ENCODE measurements at regions of chr6 and their contacts with region 1.

Region 1: GRCh38 chr6:142885182-142885867 is 59.7 kb downstream of the HIVEP2 start:
- DNase-seq: peak in 1 of 2 donors; percentile 61
- ATAC-seq: peak; percentile 89 to 97 (median 94)
- H3K4me3 ChIP-seq: peak overlapping the region in 9 of 10 donors; percentile 23 to 54 (median 45)
- H3K27ac ChIP-seq: peak overlapping the region; percentile 31 to 81 (median 70)
- H3K4me1 ChIP-seq: peaks cover 0 to 61% (median 47%) of the 10 kb centered on the region in 9 donors
- H3K27me3 ChIP-seq: no peaks in the 10 kb centered on the region
- CTCF ChIP-seq: no peak

Region 2: GRCh38 chr6:142692942-142693341 is 192.4 kb before region 1 on chr6:
- intact Hi-C with region 1: loop called in 6 of 10 experiments (anchors 5 to 10 kb)
- DNase-seq: peak; percentile 40 to 71
- ATAC-seq: peak; percentile 69 to 85 (median 77)
- H3K4me3 ChIP-seq: no peak overlapping the region
- H3K27ac ChIP-seq: peak overlapping the region in 3 of 10 donors; percentile 23 to 51 (median 29)
- H3K4me1 ChIP-seq: peaks cover 0 to 34% (median 5%) of the 10 kb centered on the region in 9 donors
- H3K27me3 ChIP-seq: no peaks in the 10 kb centered on the region
- CTCF ChIP-seq: peak; percentile 85 to 98 (median 91)

Region 3: DNA sequence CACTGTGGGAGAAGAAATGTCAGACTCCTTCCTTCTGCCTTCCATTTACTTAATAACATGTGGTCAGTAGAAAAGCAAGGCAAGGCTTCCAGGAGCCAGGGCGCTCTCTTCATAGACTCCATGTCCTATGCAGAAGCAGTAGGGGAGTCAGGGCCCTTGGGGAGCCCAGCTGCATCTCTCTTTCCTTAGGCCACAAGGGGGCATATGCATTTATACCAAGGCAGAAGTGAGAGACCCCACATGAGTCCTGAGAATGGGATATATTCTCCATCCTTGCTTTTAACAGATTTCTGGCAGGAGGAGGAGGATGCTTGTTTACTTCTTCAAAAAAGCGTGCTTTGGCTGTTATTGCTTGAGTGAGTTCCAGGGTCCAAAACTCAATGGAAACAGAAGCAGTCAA is 138.8 kb before region 1 on chr6:
- intact Hi-C with region 1: loop called in 1 of 10 experiments (anchors 10 kb)
- DNase-seq: peak in 1 of 2 donors; percentile 23
- ATAC-seq: peak in 1 of 8 donors; percentile 66
- H3K4me3 ChIP-seq: no peak overlapping the region
- H3K27ac ChIP-seq: no peak overlapping the region
- H3K4me1 ChIP-seq: no peaks in the 10 kb centered on the region
- H3K27me3 ChIP-seq: no peaks in the 10 kb centered on the region
- CTCF ChIP-seq: peak in 8 of 9 donors; percentile 42 to 63 (median 48)

Region 4: DNA sequence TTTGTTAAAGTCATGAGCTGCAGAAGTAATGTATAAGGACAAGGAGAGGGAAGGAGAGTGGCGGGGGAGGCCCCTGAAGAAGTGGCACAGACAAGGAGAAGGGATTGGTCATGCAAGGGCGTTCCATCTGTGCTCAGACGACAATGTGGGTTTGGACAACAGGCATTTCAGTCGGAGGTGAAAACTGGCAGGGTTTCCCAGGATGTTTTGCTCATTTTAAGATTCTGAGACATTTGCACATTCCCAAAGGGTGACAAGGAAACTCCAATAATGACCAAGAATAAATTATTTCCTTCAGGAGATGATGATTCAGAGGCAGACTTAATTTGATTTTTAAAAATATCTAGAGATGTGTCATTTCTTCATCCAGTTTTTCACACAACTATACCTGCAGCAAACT is 122.1 kb before region 1 on chr6:
- intact Hi-C with region 1: loop called in 2 of 10 experiments (anchors 5 to 10 kb)
- DNase-seq: no peak
- ATAC-seq: peak in 1 of 8 donors; percentile 20
- H3K4me3 ChIP-seq: no peak overlapping the region
- H3K27ac ChIP-seq: no peak overlapping the region
- H3K4me1 ChIP-seq: peaks cover 0 to 18% (median 6%) of the 10 kb centered on the region in 9 donors
- H3K27me3 ChIP-seq: no peaks in the 10 kb centered on the region
- CTCF ChIP-seq: no peak

Region 5: GRCh38 chr6:142819603-142820337 is 65.6 kb before region 1 on chr6:
- intact Hi-C with region 1: loop called in 2 of 10 experiments (anchors 10 kb)
- DNase-seq: no peak
- ATAC-seq: peak; percentile 19 to 76 (median 54)
- H3K4me3 ChIP-seq: peak overlapping the region in 9 of 10 donors; percentile 9 to 55 (median 40)
- H3K27ac ChIP-seq: peak overlapping the region; percentile 7 to 87 (median 72)
- H3K4me1 ChIP-seq: peaks cover 11 to 73% (median 56%) of the 10 kb centered on the region in 9 donors
- H3K27me3 ChIP-seq: no peaks in the 10 kb centered on the region
- CTCF ChIP-seq: no peak

Region 6: GRCh38 chr6:142845624-142846458 is 39.5 kb before region 1 on chr6:
- intact Hi-C with region 1: loop called in 2 of 10 experiments (anchors 5 kb)
- DNase-seq: peak; percentile 92 to 93
- ATAC-seq: peak; percentile 91 to 97 (median 94)
- H3K4me3 ChIP-seq: peak overlapping the region in 9 of 10 donors; percentile 1 to 51 (median 37)
- H3K27ac ChIP-seq: peak overlapping the region; percentile 69 to 92 (median 80)
- H3K4me1 ChIP-seq: peaks cover 25 to 98% (median 88%) of the 10 kb centered on the region in 9 donors
- H3K27me3 ChIP-seq: no peaks in the 10 kb centered on the region
- CTCF ChIP-seq: peak in 2 of 9 donors; percentile 26 to 38

Region 7: GRCh38 chr6:142926494-142927270 is 41.4 kb after region 1 on chr6:
- intact Hi-C with region 1: loop called in 4 of 10 experiments (anchors 5 kb)
- DNase-seq: peak; percentile 88 to 94
- ATAC-seq: peak; percentile 90 to 96 (median 93)
- H3K4me3 ChIP-seq: peak overlapping the region; percentile 55 to 76 (median 66)
- H3K27ac ChIP-seq: peak overlapping the region; percentile 94 to 98 (median 96)
- H3K4me1 ChIP-seq: peaks cover 0 to 54% (median 29%) of the 10 kb centered on the region in 9 donors
- H3K27me3 ChIP-seq: no peaks in the 10 kb centered on the region
- CTCF ChIP-seq: peak in 1 of 9 donors; percentile 8

Region 8: DNA sequence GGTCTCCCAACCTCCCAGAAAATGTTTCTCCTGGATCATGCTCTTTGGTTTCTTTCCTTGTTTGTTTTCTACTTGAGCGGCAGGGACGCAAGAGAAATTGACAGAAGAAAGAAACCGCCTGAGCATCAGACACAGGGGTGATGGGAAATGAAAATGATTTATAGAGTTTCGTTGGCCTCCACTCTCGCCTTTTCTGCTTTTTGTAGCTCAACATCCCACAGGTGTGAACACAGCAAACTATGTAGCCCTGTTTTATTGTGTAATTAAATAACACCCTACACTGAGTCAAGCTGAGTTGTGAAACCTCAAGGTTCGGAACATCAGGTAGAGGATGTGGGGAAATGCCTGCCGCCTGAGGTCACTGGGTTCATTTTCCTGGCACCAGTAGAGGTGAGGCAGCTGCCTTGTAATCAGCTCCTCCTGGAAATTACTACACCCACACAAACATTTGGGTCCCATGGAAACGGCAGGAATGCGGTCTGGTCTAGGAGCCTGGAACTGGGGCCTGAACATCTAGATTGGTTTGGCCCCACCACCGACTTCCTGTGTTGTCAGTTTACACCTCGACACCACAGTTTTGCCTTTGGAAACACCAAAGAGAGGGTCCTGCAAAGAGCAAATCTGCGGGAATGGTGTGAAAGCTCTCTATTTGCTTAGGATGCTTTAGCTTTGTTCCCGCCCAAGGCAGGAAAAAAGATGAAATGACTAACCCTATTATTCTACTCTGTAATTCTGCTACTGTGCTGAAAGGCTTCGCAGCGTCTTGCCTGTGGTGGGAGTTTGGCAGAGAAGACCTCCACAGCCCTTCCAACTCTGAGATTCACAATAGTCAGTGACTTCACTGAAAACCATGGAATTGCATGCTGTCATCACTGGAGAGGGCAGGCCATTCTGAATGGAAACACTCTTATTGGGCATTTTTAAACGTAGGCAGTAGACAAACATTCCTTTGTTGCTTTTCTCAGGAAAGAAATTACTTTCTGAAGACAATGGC is 512.2 kb after region 1 on chr6:
- intact Hi-C with region 1: no loop called
- DNase-seq: peak in 1 of 2 donors; percentile 44
- ATAC-seq: peak; percentile 34 to 87 (median 72)
- H3K4me3 ChIP-seq: no peak overlapping the region
- H3K27ac ChIP-seq: peak overlapping the region in 2 of 10 donors; percentile 5 to 16
- H3K4me1 ChIP-seq: peaks cover 0 to 32% (median 14%) of the 10 kb centered on the region in 9 donors
- H3K27me3 ChIP-seq: peaks cover 0 to 5% (median 0%) of the 10 kb centered on the region in 7 donors
- CTCF ChIP-seq: no peak

Measured in heart right ventricle (tissue), 16 donors.